ENCODE measurements at regions of chr2 and their contacts with region 1.

Region 1: DNA sequence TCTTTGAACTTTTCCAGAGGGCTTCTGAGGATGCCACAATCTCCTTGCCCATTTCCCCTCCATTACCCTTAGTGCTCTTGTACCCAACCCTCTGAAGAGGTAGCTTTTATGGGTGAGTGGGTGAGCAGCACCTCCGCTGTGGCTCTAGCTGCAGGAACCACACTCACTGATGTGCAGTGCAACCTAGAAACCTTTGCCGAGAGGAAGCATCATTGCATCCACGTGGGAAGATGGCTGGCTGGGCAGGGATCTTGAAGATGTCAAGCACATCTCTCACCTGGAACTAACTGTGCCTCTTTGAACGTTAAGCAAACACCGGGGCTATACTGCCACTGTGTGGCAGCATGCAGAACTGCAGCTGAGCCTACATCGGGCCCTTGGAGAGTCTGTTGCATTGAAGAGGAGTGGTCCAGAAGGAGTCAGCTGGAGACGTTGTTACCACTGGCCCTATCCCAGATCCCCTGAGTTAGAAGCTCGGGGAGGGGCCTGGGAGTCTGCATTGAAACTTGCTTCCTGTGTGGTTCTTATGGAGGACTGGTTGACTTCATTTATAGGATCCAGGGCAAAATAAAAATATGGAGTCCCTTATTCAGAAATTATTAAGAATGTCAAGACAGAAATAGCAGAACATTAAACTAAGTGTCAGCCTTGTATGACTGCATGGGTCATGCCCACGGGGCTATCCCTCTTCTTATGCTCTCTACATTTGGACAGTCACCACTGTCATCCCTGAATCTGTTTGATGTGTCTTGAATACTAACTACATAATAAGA is 28.7 kb downstream of the IGFBP5 start:
- DNase-seq: peak; percentile 85
- H3K4me3 ChIP-seq: no peak overlapping the region
- H3K27ac ChIP-seq: no peak overlapping the region
- H3K4me1 ChIP-seq: peaks cover 0 to 24% (median 15%) of the 10 kb centered on the region in 6 donors
- H3K27me3 ChIP-seq: peaks cover 0 to 18% (median 0%) of the 10 kb centered on the region in 7 donors
- CTCF ChIP-seq: peak; percentile 89 to 98 (median 95)
- POLR2A ChIP-seq: no peak

Region 2: DNA sequence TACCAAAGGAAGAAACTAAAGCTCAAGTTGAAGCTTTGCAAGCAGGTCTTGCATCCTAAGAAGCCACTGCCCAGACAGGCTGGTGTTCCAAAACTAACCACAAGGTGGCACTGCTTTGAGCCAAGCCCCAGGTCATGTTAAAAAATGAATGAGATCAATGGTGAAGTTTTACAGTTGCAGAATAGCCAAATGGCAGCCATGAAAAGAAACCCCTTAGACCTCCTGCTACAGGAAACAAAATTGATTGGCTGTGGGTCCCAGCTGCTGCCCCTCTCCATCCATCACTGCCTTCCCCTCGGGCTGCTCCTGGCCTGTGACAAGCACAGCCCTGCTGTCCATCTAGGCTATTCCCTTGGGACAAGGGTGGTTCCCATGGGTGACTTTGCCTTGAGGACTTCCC is 632.6 kb before region 1 on chr2:
- intact Hi-C with region 1: loop called (anchors 10 kb)
- DNase-seq: peak; percentile 83
- H3K4me3 ChIP-seq: no peak overlapping the region
- H3K27ac ChIP-seq: no peak overlapping the region
- H3K4me1 ChIP-seq: peaks cover 0 to 19% (median 6%) of the 10 kb centered on the region in 6 donors
- H3K27me3 ChIP-seq: no peaks in the 10 kb centered on the region
- CTCF ChIP-seq: peak; percentile 57 to 97 (median 91)
- POLR2A ChIP-seq: no peak

Region 3: DNA sequence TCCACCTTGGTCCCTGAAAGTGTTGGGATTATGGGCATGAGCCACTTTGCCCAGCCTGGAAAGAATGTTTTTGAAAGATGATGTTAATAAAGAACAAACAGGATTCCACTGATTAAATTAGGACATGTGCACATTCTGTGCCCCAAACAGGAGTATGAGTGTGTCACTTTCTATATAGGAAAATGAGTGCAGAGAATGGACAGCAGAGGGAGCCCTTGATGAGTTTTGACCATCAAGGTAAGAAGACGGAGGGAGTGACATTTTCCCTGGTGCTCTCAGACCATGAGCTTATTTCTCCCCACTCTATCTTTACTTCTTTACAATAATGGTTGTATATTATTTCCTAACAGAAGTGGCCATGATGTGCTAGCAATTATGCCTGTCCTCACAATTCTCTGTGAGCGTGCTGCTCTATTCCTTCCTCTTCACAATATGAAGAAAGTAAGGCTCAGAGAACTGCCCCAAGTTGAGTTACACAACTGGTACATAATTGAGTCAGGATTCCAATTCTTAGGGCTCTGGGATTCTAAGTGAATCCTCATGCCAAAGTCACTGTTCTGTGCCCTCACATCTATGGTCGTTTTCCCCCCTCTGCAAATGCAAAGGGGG is 147.4 kb before region 1 on chr2:
- intact Hi-C with region 1: loop called (anchors 5 kb)
- DNase-seq: no peak
- H3K4me3 ChIP-seq: no peak overlapping the region
- H3K27ac ChIP-seq: peak overlapping the region in 3 of 8 donors; percentile 4 to 20 (median 13)
- H3K4me1 ChIP-seq: peaks cover 0 to 11% (median 7%) of the 10 kb centered on the region in 6 donors
- H3K27me3 ChIP-seq: no peaks in the 10 kb centered on the region
- CTCF ChIP-seq: peak; percentile 48 to 86 (median 73)
- POLR2A ChIP-seq: no peak

Region 4: GRCh38 chr2:216692636-216693413 is 26.2 kb after region 1 on chr2:
- intact Hi-C with region 1: no loop called
- DNase-seq: no peak
- H3K4me3 ChIP-seq: peak overlapping the region; percentile 18 to 68 (median 42)
- H3K27ac ChIP-seq: peak overlapping the region in 7 of 8 donors; percentile 51 to 81 (median 68)
- H3K4me1 ChIP-seq: peaks cover 21 to 74% (median 40%) of the 10 kb centered on the region in 6 donors
- H3K27me3 ChIP-seq: peaks cover 0 to 94% (median 36%) of the 10 kb centered on the region in 7 donors
- CTCF ChIP-seq: no peak
- POLR2A ChIP-seq: no peak